SK-N-SH (cell line): ENCODE measurements at regions of chr10 and their contacts with region 1.

Region 1: GRCh38 chr10:59090817-59091622 is 85.4 kb upstream of the PHYHIPL start:
- DNase-seq: no peak
- H3K4me3 ChIP-seq: no peak overlapping the region
- H3K27ac ChIP-seq: no peak overlapping the region
- H3K4me1 ChIP-seq: peaks cover 0 to 7% of the 10 kb centered on the region in 2 experiments; a peak in 2 of 4 replicates
- H3K27me3 ChIP-seq: no peaks in the 10 kb centered on the region
- CTCF ChIP-seq: no peak
- EP300 ChIP-seq: no peak
- RAD21 ChIP-seq: no peak

Region 2: GRCh38 chr10:59079386-59080226 is 11.4 kb before region 1 on chr10:
- CTCF ChIA-PET with region 1: interaction called, 13 read pairs
- POLR2A ChIA-PET with region 1: no interaction called
- DNase-seq: no peak
- H3K4me3 ChIP-seq: no peak overlapping the region
- H3K27ac ChIP-seq: peak overlapping the region; percentile 67 to 79
- H3K4me1 ChIP-seq: peaks cover 10 to 11% of the 10 kb centered on the region in 2 experiments; a peak in 3 of 4 replicates
- H3K27me3 ChIP-seq: no peaks in the 10 kb centered on the region
- CTCF ChIP-seq: peak; percentile 30; the same call in 1 of the 2 replicates
- EP300 ChIP-seq: peak in 1 of 2 experiments; percentile 53; a peak in 1 of 4 replicates
- RAD21 ChIP-seq: peak; percentile 33

Region 3: GRCh38 chr10:59808896-59809643 is 718.0 kb after region 1 on chr10:
- CTCF ChIA-PET with region 1: no interaction called
- POLR2A ChIA-PET with region 1: no interaction called
- DNase-seq: peak; percentile 54
- H3K4me3 ChIP-seq: no peak overlapping the region; a peak in 1 of 4 replicates
- H3K27ac ChIP-seq: no peak overlapping the region
- H3K4me1 ChIP-seq: no peaks in the 10 kb centered on the region
- H3K27me3 ChIP-seq: no peaks in the 10 kb centered on the region
- CTCF ChIP-seq: peak; percentile 77
- EP300 ChIP-seq: no peak
- RAD21 ChIP-seq: peak; percentile 88